ENCODE measurements at regions of chr11 and their contacts with region 1.

Region 1: DNA sequence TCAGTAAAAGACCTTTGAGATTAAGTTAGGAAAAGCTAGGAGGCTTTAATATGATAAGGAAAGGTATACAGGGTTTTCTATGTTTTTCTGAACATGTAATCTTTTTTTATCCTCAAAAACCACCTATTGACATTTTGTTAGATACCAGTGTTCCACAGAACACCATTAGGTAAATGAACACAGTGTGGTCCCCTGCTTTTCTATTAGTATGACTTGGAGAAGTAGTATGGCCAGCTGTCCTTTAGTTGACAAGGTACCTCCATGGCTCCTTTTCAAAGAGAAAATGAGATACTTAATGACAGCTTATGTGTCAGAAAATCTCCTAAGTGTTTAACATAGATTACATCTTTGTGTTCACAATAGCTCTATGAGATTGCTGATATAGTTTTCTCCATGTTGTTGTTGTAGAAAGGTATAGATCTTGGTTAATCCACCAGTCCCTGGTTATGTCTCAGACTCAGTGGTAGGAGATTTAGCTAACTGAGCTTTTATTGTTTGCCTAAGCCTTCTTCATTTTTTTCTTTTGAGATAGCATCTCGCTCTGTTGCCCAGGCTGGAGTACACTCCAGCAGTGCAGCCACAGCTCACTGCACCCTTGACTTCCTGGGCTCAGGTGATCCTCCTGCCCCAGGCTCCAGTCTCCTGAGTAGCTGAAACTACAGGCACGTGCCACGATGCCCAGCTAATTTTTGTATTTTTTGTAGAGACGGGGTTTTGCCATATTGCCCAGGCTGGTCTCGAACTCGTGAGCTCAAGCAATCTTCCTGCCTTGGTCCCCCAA is 46.0 kb downstream of the STIM1 start:
- DNase-seq: no peak
- ATAC-seq: peak; percentile 22; the same call in 1 of the 3 replicates
- H3K4me3 ChIP-seq: no peak overlapping the region
- H3K27ac ChIP-seq: no peak overlapping the region
- H3K4me1 ChIP-seq: peaks cover 39 to 41% of the 10 kb centered on the region in 2 experiments; a peak in 4 of 5 replicates
- H3K27me3 ChIP-seq: no peaks in the 10 kb centered on the region
- CTCF ChIP-seq: no peak
- EP300 ChIP-seq: no peak
- POLR2A ChIP-seq: no peak
- RAD21 ChIP-seq: no peak

Region 2: GRCh38 chr11:2975594-2975993 is 925.8 kb before region 1 on chr11:
- CTCF ChIA-PET with region 1: no interaction called
- POLR2A ChIA-PET with region 1: no interaction called
- in situ Hi-C with region 1: no loop called
- intact Hi-C with region 1: no loop called
- DNase-seq: peak; percentile 37 to 61 (median 44)
- ATAC-seq: peak; percentile 96
- H3K4me3 ChIP-seq: no peak overlapping the region
- H3K27ac ChIP-seq: no peak overlapping the region
- H3K4me1 ChIP-seq: no peaks in the 10 kb centered on the region
- H3K27me3 ChIP-seq: no peaks in the 10 kb centered on the region
- CTCF ChIP-seq: peak; percentile 57 to 60 (median 58)
- EP300 ChIP-seq: no peak
- POLR2A ChIP-seq: no peak
- RAD21 ChIP-seq: peak; percentile 34 to 42

Region 3: DNA sequence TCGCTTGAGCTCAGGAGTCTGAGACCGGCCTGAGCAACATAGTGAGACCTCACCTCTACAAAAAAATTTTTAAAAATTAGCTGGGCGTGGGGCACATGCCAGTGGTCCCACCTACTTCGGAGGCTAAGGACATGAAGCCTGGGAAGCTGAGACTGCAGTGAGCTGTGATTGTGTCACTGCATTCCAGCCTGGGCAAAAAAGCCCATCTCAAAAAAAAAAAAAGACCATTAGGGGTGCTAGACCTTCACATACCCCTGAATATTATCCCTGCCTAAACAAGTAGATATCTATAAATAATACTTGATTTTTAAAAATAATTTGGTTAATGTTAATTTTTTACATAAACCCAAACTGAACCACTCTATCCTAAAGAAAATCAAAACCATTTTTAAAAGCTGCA is 128.3 kb before region 1 on chr11:
- CTCF ChIA-PET with region 1: no interaction called
- POLR2A ChIA-PET with region 1: interaction called, 10 read pairs
- in situ Hi-C with region 1: no loop called
- intact Hi-C with region 1: no loop called
- DNase-seq: no peak
- ATAC-seq: no peak
- H3K4me3 ChIP-seq: no peak overlapping the region
- H3K27ac ChIP-seq: no peak overlapping the region
- H3K4me1 ChIP-seq: no peaks in the 10 kb centered on the region
- H3K27me3 ChIP-seq: no peaks in the 10 kb centered on the region
- CTCF ChIP-seq: no peak
- EP300 ChIP-seq: no peak
- POLR2A ChIP-seq: no peak
- RAD21 ChIP-seq: no peak

Region 4: DNA sequence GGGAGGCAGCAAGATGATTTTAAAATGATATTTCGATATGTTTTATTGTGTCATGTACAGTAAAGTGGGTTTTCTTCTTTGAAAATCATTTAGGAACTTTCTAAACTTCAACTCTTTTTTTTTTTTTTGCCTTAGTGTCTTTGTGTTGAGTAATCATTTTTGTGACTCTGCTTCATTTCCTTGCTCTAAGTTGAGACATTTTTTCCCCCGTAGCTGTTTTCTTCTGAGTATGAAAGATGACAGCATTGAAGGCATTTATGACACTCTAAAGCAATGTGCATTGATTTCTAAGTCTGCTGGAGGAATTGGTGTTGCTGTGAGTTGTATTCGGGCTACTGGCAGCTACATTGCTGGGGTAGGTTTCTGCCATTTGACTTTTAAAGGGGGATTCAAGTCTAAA is 216.7 kb after region 1 on chr11:
- CTCF ChIA-PET with region 1: no interaction called
- POLR2A ChIA-PET with region 1: no interaction called
- in situ Hi-C with region 1: no loop called
- intact Hi-C with region 1: no loop called
- DNase-seq: no peak
- ATAC-seq: no peak
- H3K4me3 ChIP-seq: no peak overlapping the region
- H3K27ac ChIP-seq: no peak overlapping the region
- H3K4me1 ChIP-seq: no peaks in the 10 kb centered on the region
- H3K27me3 ChIP-seq: no peaks in the 10 kb centered on the region
- CTCF ChIP-seq: no peak
- EP300 ChIP-seq: no peak
- POLR2A ChIP-seq: no peak
- RAD21 ChIP-seq: no peak